ENCODE measurements at regions of chr1 and their contacts with region 1.

Region 1: GRCh38 chr1:20493839-20494608 is 8.0 kb upstream of the CAMK2N1 start:
- DNase-seq: peak; percentile 88
- ATAC-seq: peak; percentile 68
- H3K4me3 ChIP-seq: no peak overlapping the region
- H3K27ac ChIP-seq: peak overlapping the region; percentile 38
- H3K4me1 ChIP-seq: peaks cover 19% of the 10 kb centered on the region
- H3K27me3 ChIP-seq: no peaks in the 10 kb centered on the region
- CTCF ChIP-seq: peak; percentile 99
- POLR2A ChIP-seq: peak; percentile 59; the same call in 1 of the 2 replicates
- RAD21 ChIP-seq: peak; percentile 99

Region 2: GRCh38 chr1:19974822-19975416 is 519.1 kb before region 1 on chr1:
- CTCF ChIA-PET with region 1: no interaction called
- POLR2A ChIA-PET with region 1: no interaction called
- dilution Hi-C with region 1: no loop called
- in situ Hi-C with region 1: no loop called
- intact Hi-C with region 1: loop called (anchors 2 kb)
- DNase-seq: peak; percentile 72
- ATAC-seq: peak; percentile 92
- H3K4me3 ChIP-seq: no peak overlapping the region
- H3K27ac ChIP-seq: no peak overlapping the region
- H3K4me1 ChIP-seq: no peaks in the 10 kb centered on the region
- H3K27me3 ChIP-seq: peaks cover 27% of the 10 kb centered on the region
- CTCF ChIP-seq: peak; percentile 84
- POLR2A ChIP-seq: no peak
- RAD21 ChIP-seq: peak; percentile 88

Region 3: DNA sequence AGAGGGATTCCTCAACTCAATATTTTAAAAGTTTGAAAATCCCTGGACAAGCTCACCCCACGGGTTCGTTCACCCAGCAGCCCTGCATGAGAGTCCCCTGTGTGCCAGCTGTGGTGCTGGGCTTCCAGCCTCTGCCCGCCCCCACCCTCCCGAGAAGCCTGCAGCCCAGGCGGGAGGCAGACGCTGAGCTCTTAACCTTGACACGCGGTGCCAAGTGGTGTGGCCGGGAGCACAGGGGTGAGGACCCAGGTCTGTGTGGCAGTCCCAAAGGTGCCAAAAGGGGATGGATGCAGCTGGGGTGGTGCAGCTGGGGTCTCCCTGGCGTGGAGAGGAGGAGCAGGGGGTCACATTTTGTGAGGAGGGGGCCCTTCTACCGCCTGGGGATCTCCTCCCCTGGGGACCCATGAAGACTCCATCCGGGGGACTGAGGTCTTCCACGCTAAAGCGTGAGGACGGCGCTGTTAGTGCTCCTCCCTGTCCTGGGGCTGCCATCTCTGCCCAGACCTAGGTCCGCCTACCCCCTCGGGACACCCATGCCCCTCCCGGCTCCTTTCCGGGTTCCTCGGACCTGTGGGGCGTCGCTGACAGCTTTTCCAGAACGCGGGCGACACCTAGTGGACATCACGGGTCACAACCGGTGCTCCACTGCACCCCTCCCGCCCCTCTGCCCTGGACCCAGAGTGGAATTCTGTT is 342.0 kb before region 1 on chr1:
- CTCF ChIA-PET with region 1: interaction called, 4 read pairs
- POLR2A ChIA-PET with region 1: no interaction called
- dilution Hi-C with region 1: no loop called
- in situ Hi-C with region 1: no loop called
- intact Hi-C with region 1: loop called (anchors 2 kb)
- DNase-seq: peak; percentile 41
- ATAC-seq: peak; percentile 99
- H3K4me3 ChIP-seq: 0 out of 2 replicates have a peak overlapping the region, but pooled peaks have one; percentile 8
- H3K27ac ChIP-seq: no peak overlapping the region
- H3K4me1 ChIP-seq: peaks cover 3% of the 10 kb centered on the region; the same call in 1 of the 2 replicates
- H3K27me3 ChIP-seq: peaks cover 5% of the 10 kb centered on the region
- CTCF ChIP-seq: peak; percentile 90
- POLR2A ChIP-seq: no peak; the same call in 1 of the 2 replicates
- RAD21 ChIP-seq: peak; percentile 92

Region 4: DNA sequence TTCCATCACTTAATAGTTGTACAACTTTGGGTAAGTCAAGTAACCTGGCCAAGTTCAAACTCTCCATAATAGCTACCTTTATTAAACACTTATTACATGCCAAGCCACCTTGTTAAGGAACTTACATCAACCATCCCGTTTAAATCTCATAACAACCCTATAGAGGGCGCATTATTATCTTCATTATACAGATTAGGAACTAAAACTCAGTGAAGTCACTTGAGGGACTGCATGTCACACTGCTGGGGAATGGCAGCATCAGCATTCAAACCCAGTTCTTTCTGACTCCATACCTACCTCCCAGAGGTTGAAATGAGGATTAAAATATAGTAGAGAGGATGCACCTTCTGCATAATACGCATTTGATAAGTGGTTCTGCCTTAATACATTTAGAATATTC is 260.6 kb before region 1 on chr1:
- CTCF ChIA-PET with region 1: no interaction called
- POLR2A ChIA-PET with region 1: no interaction called
- dilution Hi-C with region 1: no loop called
- in situ Hi-C with region 1: no loop called
- intact Hi-C with region 1: loop called (anchors 1 kb)
- DNase-seq: peak; percentile 38
- ATAC-seq: peak; percentile 77
- H3K4me3 ChIP-seq: no peak overlapping the region
- H3K27ac ChIP-seq: no peak overlapping the region
- H3K4me1 ChIP-seq: 0 out of 2 replicates have a peak, but pooled peaks cover 2% of the 10 kb centered on the region
- H3K27me3 ChIP-seq: peaks cover 32% of the 10 kb centered on the region
- CTCF ChIP-seq: peak; percentile 42
- POLR2A ChIP-seq: no peak
- RAD21 ChIP-seq: peak; percentile 26

Region 5: GRCh38 chr1:20279509-20279908 is 214.5 kb before region 1 on chr1:
- CTCF ChIA-PET with region 1: no interaction called
- POLR2A ChIA-PET with region 1: no interaction called
- dilution Hi-C with region 1: no loop called
- in situ Hi-C with region 1: no loop called
- intact Hi-C with region 1: no loop called
- DNase-seq: peak; percentile 60
- ATAC-seq: peak; percentile 84
- H3K4me3 ChIP-seq: no peak overlapping the region
- H3K27ac ChIP-seq: no peak overlapping the region
- H3K4me1 ChIP-seq: no peaks in the 10 kb centered on the region
- H3K27me3 ChIP-seq: peaks cover 3% of the 10 kb centered on the region
- CTCF ChIP-seq: no peak
- POLR2A ChIP-seq: no peak
- RAD21 ChIP-seq: no peak

Region 6: GRCh38 chr1:20376880-20377494 is 117.0 kb before region 1 on chr1:
- CTCF ChIA-PET with region 1: interaction called, 3 read pairs
- POLR2A ChIA-PET with region 1: no interaction called
- dilution Hi-C with region 1: no loop called
- in situ Hi-C with region 1: loop called (anchors 5 kb)
- intact Hi-C with region 1: loop called (anchors 1 kb)
- DNase-seq: peak; percentile 35
- ATAC-seq: peak; percentile 92
- H3K4me3 ChIP-seq: no peak overlapping the region
- H3K27ac ChIP-seq: no peak overlapping the region
- H3K4me1 ChIP-seq: peaks cover 10% of the 10 kb centered on the region; the same call in 1 of the 2 replicates
- H3K27me3 ChIP-seq: peaks cover 14% of the 10 kb centered on the region; the same call in 1 of the 2 replicates
- CTCF ChIP-seq: peak; percentile 81
- POLR2A ChIP-seq: no peak
- RAD21 ChIP-seq: peak; percentile 75